ENCODE measurements at regions of chr9 and their contacts with region 1.

Region 1: GRCh38 chr9:124320062-124320973 is 62.6 kb downstream of the NEK6 start:
- DNase-seq: peak; percentile 75
- H3K4me3 ChIP-seq: no peak overlapping the region
- H3K27ac ChIP-seq: no peak overlapping the region
- H3K4me1 ChIP-seq: no peaks in the 10 kb centered on the region
- H3K27me3 ChIP-seq: no peaks in the 10 kb centered on the region
- CTCF ChIP-seq: peak; percentile 80 to 90 (median 87)
- EP300 ChIP-seq: no peak
- POLR2A ChIP-seq: no peak

Region 2: DNA sequence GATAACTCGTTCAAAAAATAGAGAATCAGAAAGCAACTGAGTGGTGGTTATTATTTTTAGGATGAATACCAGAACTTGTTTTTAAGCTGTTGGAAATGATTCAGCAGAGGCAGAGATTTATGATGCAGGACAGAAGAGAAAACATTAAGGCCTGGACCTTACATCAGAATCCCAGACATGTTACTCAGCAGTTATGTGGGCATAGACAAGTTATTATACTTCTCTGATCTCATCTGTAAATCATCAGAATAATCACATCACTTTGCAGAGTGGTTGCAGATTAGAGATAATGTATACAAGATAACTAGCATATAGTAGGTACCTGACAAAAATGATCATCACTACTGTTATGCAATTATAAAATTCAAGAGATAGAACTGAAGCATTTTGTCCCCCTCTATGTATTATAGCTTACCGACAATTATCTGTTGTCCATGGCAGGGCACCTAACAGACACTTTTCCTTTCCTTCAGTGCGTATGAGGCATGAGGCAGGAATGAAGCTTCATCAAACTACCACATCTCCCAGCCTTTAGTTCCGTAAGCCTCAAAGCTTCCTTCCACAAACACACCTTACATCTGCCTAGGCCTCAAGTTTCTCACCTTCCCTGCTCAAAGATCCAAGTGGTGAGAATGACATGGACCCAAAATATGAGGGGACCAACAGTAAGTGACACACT is 556.3 kb before region 1 on chr9:
- in situ Hi-C with region 1: no loop called
- intact Hi-C with region 1: no loop called
- DNase-seq: no peak
- H3K4me3 ChIP-seq: no peak overlapping the region
- H3K27ac ChIP-seq: no peak overlapping the region
- H3K4me1 ChIP-seq: peaks cover 0 to 26% (median 3%) of the 10 kb centered on the region in 4 donors
- H3K27me3 ChIP-seq: no peaks in the 10 kb centered on the region
- CTCF ChIP-seq: no peak
- EP300 ChIP-seq: no peak
- POLR2A ChIP-seq: no peak

Region 3: DNA sequence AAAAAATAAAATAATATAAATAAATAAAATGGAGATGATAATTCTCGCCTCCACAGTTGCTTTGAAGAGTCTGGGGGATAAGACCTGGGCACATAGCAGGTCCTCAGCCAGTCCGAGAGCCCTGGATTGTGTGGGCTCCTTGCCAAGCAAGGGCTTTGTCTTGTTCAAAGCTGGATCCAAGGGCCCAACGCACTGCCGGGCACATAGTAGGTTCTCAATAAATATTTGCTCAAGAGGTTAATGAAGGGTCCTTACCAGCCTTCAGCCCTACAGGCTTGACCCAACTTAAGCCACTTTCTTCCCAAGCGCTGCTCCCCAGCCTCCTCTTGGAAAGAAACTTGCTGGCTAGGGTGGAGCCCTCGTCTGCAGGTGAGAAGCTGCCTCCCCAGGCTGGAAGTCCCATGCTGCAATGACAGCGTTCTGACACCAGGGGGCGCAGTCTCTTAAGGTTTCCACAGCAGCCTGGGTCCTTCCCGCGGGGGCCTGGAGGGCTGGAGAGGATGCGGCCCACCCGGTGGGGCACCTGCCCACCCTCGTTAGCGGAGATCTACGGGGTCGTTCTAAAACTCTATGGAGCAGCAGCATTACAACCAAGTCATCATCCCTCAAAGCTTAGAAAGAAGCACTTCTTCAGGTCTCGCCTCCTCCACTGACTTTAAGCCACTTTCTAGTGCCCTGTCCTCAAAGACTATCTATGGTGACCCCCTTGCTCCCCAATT is 193.6 kb before region 1 on chr9:
- in situ Hi-C with region 1: loop called (anchors 10 kb)
- intact Hi-C with region 1: loop called (anchors 2 kb)
- DNase-seq: peak; percentile 80
- H3K4me3 ChIP-seq: no peak overlapping the region
- H3K27ac ChIP-seq: no peak overlapping the region
- H3K4me1 ChIP-seq: no peaks in the 10 kb centered on the region
- H3K27me3 ChIP-seq: no peaks in the 10 kb centered on the region
- CTCF ChIP-seq: peak; percentile 96 to 99 (median 98)
- EP300 ChIP-seq: no peak
- POLR2A ChIP-seq: no peak

Measured in transverse colon (tissue), 4 donors.